Dorsolateral prefrontal cortex (tissue), 120 donors: ENCODE measurements at regions of chr2 and their contacts with region 1.

Region 1: DNA sequence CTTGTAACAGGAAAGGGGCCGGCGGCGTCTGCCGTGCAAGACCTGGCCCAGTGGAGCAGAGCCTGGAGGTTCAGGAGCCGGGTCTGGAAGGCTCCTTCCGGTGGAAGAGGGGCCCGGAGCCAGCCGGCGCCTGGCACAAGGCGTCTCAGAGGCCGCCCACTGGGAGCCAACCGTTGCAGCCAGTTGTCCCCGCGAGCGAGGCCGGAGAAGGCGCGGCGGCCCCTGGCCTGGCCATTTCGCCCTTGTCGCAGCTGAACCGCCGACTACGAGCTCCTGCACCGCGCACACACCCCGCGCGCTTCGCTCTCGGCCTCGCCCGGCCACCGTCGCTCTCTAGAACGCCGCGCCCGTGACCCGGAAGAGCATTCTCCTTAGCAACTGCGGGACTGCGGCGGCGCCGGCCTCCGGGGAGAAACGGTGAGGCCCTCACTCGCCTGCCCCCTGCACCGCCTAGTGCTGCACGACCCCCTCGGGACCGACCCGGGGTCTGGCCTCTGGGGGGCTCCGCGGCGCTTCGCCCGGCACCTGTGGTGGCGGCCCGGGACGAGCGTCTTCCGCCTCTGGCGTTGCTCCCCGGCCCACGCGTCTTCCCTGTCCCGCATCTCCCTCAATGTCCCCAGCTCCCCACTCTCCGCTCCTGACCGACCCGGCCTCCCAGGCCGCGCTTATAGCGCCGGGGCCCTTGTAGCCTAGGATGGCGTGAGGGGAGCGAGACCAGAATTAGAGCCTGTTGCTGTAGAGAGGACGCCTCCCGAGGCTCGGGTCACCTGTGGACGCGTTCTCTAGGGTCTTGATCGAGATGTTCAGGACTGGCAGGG is at the start of gene DIS3L2:
- DNase-seq: peak; percentile 77 to 89 (median 82)
- H3K4me3 ChIP-seq: peak within 1 kb of the TSS; percentile 66 to 100 (median 94)
- H3K27ac ChIP-seq: peak within 1 kb of the TSS; percentile 14 to 98 (median 92)
- H3K27me3 ChIP-seq: no peaks in the 10 kb centered on the region
- CTCF ChIP-seq: peak in 36 of 56 donors; percentile 5 to 61 (median 34)
- total RNA-seq, gene DIS3L2: 36.1 to 76.8 (median 53.6) TPM

Region 2: DNA sequence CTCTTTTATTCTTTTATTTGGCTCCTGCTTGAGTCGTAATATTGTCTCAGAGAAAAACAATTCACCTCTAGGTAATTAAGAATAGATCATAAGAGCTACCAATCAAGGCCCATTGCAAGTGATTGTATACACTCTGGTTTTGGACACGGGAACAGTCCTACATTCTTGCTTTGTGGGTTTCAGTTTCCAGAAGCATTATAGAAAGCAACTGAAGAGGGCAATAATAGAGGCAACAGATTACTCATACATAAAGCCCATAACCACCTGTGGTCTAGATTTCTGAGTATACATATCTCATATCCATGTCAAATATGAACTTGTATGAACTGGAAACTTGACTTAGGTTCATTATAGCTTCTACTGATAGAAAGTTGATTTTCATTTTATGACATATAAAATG is 65.4 kb after region 1 on chr2:
- intact Hi-C with region 1: loop called in 1 of 2 experiments (anchors 10 kb)
- DNase-seq: no peak
- H3K4me3 ChIP-seq: no peak overlapping the region
- H3K27ac ChIP-seq: no peak overlapping the region
- H3K27me3 ChIP-seq: no peaks in the 10 kb centered on the region
- CTCF ChIP-seq: no peak